ENCODE measurements at regions of chr12 and their contacts with region 1.

Region 1: DNA sequence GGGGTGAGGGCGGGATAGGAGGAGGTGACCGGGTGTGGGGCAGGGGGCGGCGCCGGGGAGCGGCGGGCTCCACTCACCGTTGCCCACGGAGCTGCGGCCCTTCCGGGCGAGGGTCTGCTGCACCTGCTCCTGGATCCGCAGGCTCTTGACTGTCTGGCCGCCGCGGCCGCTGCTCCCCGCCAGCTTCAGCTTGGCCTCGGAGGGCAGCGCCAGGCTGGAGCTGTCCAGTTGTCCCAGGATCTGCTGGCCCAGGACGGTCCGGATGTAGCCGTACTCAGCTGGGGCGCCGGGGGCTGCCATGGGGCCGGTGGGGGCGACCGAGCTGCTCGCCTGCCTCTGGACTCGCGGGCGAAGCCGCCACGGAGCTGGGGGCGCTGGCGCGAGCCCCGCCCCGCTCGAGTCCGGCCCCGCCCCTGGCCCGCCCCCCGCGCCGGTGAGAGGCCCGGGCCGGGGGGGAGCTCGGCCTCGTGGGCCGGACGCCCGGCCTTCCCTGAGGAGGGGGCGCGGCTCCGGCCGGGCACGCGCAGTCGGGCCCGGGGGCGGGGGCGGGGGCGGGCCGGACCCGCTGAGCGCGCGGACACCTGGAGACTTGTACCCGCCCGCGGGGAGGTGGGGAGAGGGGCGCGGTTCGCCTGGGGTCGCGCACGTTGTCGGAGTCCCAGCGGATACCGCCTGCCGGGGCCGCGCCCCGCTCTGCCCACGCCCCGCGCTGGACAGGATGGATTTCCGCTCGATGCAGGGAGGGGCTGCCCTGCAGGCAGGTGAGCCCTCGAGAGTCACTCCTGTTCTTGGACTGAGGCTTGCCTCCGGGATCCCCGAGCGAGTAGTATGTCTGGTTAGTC is at the start of gene PKP2:
- DNase-seq: peak; percentile 59 to 79 (median 64)
- ATAC-seq: peak; percentile 36 to 89 (median 78)
- H3K4me3 ChIP-seq: peak within 1 kb of the TSS; percentile 60 to 96 (median 68)
- H3K27ac ChIP-seq: peak within 1 kb of the TSS; percentile 54 to 94 (median 83)
- H3K4me1 ChIP-seq: peaks cover 0 to 23% (median 3%) of the 10 kb centered on the region in 12 donors
- H3K27me3 ChIP-seq: peaks cover 0 to 26% (median 5%) of the 10 kb centered on the region in 9 donors
- CTCF ChIP-seq: no peak
- POLR2A ChIP-seq: peak; percentile 24 to 74
- total RNA-seq, gene PKP2: 269 to 576 (median 402) TPM

Region 2: GRCh38 chr12:32780071-32780470 is 116.6 kb before region 1 on chr12:
- intact Hi-C with region 1: loop called in 1 of 10 experiments (anchors 10 kb)
- DNase-seq: no peak
- ATAC-seq: no peak
- H3K4me3 ChIP-seq: no peak overlapping the region
- H3K27ac ChIP-seq: no peak overlapping the region
- H3K4me1 ChIP-seq: no peaks in the 10 kb centered on the region
- H3K27me3 ChIP-seq: no peaks in the 10 kb centered on the region
- CTCF ChIP-seq: no peak
- POLR2A ChIP-seq: no peak

Region 3: DNA sequence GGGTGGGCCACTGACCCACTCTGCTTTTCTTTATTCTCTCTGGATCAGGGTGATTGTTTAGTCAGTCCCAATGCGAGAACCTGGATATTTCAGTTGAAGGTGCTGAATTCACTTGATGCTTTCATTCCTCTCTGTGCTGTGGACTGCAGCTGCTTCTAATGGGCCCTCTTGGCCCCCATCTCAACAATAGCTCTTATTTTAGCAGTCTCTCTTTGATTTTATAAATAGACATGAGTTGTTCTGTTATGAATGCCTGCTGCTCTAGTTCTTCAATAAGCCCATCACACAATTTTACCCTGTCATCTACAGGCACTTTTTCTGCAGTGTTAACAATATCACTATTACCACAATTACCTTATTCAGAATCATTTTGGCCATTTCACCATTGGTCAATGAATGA is 86.8 kb before region 1 on chr12:
- intact Hi-C with region 1: loop called in 1 of 10 experiments (anchors 10 kb)
- DNase-seq: no peak
- ATAC-seq: peak; percentile 76 to 86 (median 82)
- H3K4me3 ChIP-seq: no peak overlapping the region
- H3K27ac ChIP-seq: peak overlapping the region in 9 of 12 donors; percentile 6 to 81 (median 73)
- H3K4me1 ChIP-seq: peaks cover 0 to 39% (median 7%) of the 10 kb centered on the region in 12 donors
- H3K27me3 ChIP-seq: no peaks in the 10 kb centered on the region
- CTCF ChIP-seq: no peak
- POLR2A ChIP-seq: no peak

Region 4: GRCh38 chr12:32877601-32878459 is 18.8 kb before region 1 on chr12:
- intact Hi-C with region 1: loop called in 1 of 10 experiments (anchors 2 kb)
- DNase-seq: peak; percentile 82 to 90 (median 87)
- ATAC-seq: peak; percentile 88 to 94 (median 92)
- H3K4me3 ChIP-seq: peak overlapping the region in 8 of 12 donors; percentile 5 to 50 (median 26)
- H3K27ac ChIP-seq: peak overlapping the region; percentile 68 to 97 (median 86)
- H3K4me1 ChIP-seq: peaks cover 0 to 77% (median 16%) of the 10 kb centered on the region in 12 donors
- H3K27me3 ChIP-seq: no peaks in the 10 kb centered on the region
- CTCF ChIP-seq: no peak
- POLR2A ChIP-seq: peak in 1 of 2 donors; percentile 58